Activated naive CD4-positive, alpha-beta T cell treated with anti-CD3 and anti-CD28 coated beads for 36 hours (primary cell): ENCODE measurements at regions of chr6 and their contacts with region 1.

Region 1: GRCh38 chr6:106163966-106164877 is 78.1 kb downstream of the PRDM1 start:
- DNase-seq: peak; percentile 80
- H3K4me3 Mint-ChIP-seq: peak overlapping the region; percentile 36
- H3K27ac Mint-ChIP-seq: peak overlapping the region; percentile 78
- H3K4me1 Mint-ChIP-seq: peaks cover 35% of the 10 kb centered on the region
- H3K27me3 Mint-ChIP-seq: peaks cover 2% of the 10 kb centered on the region

Region 2: DNA sequence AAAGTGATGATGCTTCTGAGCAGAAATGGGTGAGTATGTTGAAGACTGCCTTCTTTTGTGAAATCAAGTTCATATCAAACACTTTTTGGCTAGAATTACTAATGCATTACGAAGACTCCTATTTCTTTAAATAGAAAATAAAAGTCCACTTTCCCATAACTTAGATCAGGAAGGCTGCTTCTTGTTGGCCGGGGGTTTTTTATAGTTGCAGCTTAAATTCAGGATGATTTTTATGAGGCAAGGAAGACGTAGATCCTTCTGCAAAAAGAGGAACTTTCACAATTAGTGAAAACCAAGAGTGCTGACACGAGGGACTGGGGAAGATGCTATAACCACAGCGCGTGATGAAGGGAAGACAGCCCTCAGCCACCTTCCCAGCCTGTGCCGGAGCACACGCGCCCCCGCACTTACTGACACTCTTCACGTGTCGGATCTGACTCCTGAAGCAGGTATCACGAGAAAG is 284.2 kb before region 1 on chr6:
- CTCF ChIA-PET with region 1: no interaction called
- intact Hi-C with region 1: loop called (anchors 1 kb)
- DNase-seq: peak; percentile 74
- H3K4me3 Mint-ChIP-seq: peak overlapping the region; percentile 11
- H3K27ac Mint-ChIP-seq: peak overlapping the region; percentile 78
- H3K4me1 Mint-ChIP-seq: peaks cover 25% of the 10 kb centered on the region
- H3K27me3 Mint-ChIP-seq: peaks cover 30% of the 10 kb centered on the region

Region 3: GRCh38 chr6:106114492-106115265 is 49.5 kb before region 1 on chr6:
- CTCF ChIA-PET with region 1: interaction called, 3 read pairs
- intact Hi-C with region 1: loop called (anchors 1 kb)
- DNase-seq: peak; percentile 83
- H3K4me3 Mint-ChIP-seq: no peak overlapping the region
- H3K27ac Mint-ChIP-seq: peak overlapping the region; percentile 52
- H3K4me1 Mint-ChIP-seq: peaks cover 70% of the 10 kb centered on the region
- H3K27me3 Mint-ChIP-seq: peaks cover 31% of the 10 kb centered on the region

Region 4: DNA sequence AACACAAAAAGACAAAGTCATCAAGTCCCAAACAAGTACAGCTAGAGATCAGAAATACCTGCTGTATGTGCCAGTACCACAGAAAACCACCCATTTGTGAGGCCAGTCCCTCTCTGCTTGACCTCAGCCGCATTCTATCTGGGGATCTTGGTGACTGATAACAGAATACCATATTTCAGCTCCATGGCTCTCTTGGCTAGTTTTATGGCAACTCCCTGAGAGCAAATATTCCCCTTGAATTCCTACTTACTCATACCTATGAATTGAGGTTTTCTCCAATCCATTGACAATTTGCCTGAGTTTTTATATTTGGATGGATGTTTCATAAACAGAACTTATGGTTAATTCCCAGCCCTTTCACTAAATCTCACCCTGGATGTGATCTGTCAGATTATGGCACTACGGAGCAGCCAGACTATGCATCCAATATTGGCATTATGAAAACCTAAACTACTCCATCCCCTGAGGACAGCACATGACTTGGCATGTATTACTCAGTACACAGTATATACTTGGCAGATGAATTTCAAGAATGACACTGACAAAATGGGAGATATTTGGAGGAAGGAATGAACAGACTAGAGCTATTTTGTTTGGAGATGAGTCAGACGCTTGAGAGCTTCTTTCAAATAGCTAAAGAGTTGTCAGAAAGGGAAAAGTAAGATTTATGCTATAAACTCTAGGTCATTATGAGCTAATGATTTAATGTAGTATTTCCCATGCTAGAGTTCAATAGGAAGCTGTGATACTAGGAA is 17.6 kb after region 1 on chr6:
- CTCF ChIA-PET with region 1: interaction called, 3 read pairs
- intact Hi-C with region 1: loop called (anchors 1 kb)
- DNase-seq: no peak
- H3K4me3 Mint-ChIP-seq: no peak overlapping the region
- H3K27ac Mint-ChIP-seq: no peak overlapping the region
- H3K4me1 Mint-ChIP-seq: peaks cover 33% of the 10 kb centered on the region
- H3K27me3 Mint-ChIP-seq: no peaks in the 10 kb centered on the region

Region 5: GRCh38 chr6:106206905-106207304 is 42.7 kb after region 1 on chr6:
- CTCF ChIA-PET with region 1: no interaction called
- intact Hi-C with region 1: loop called (anchors 1 kb)
- DNase-seq: no peak
- H3K4me3 Mint-ChIP-seq: no peak overlapping the region
- H3K27ac Mint-ChIP-seq: no peak overlapping the region
- H3K4me1 Mint-ChIP-seq: peaks cover 18% of the 10 kb centered on the region
- H3K27me3 Mint-ChIP-seq: no peaks in the 10 kb centered on the region